Head of caudate nucleus (tissue), 42 donors: ENCODE measurements at regions of chr14 and their contacts with region 1.

Region 1: DNA sequence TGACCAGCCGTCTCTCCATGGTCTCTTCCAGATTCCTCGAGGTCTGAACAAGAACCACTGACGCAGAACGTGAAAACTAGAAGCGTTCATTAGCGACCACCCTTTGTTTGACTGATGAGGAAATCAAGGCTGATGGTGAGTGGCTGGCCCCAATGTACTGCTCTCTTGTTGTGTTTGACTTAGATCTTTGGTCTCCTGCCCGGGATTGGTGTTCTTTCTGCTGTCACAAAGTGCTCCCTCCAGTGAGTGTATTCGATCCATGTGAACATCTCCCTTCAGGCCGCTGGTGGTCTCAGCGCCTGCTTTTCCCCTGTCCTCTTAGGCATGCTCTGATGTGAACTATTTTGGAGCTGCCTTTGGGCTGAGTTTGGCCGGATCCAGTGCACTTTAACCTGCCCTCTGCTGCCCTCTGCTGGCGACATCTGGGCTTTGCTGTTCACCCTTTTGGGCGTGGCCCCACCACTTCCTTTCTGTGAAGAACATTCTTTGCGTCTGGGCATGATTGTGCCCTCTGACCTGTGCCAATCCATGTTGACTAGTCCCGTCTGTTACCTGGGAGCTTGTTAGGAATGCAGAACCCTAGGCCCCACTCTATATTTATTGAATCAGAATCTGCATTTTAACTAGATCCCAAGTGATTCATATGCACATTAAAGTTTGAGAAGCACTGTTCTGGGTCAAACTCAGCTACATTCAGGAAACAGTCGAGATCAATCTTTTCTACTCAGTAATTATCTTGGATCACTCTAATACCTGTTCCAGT is 279.2 kb downstream of the TTC6 start:
- DNase-seq: peak; percentile 30 to 92 (median 78)

Region 2: GRCh38 chr14:37090026-37090425 is 784.6 kb before region 1 on chr14:
- intact Hi-C with region 1: no loop called
- DNase-seq: no peak

Region 3: GRCh38 chr14:37246427-37246914 is 628.1 kb before region 1 on chr14:
- intact Hi-C with region 1: loop called (anchors 10 kb)
- DNase-seq: peak in 5 of 42 donors; percentile 6 to 48 (median 12)